Right ventricle myocardium inferior (tissue), 1 donor: ENCODE measurements at regions of chr7 and their contacts with region 1.

Region 1: DNA sequence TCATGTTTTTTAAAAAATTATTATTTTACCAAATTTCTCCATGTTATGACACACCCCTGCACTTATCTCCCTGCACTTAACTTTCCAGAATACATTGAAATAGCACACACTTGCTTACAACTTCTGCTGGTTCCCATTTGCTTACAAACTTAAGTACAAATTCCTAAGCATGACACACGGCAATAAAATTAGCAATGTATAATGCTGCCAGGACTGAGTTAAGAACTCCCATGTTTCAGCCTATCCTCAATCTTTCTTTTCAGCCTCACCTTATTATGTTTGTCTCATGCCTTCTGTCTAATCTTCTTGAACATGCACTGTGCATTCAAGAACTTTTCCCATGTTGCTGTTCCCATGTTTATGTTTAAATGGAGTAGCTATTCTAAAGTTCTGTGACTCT is 40.8 kb downstream of the PRPS1L1 start:
- DNase-seq: no peak
- ATAC-seq: peak; percentile 62

Region 2: GRCh38 chr7:18128846-18129245 is 142.0 kb after region 1 on chr7:
- intact Hi-C with region 1: no loop called
- DNase-seq: no peak
- ATAC-seq: no peak

Region 3: GRCh38 chr7:18221377-18222293 is 234.8 kb after region 1 on chr7:
- intact Hi-C with region 1: loop called (anchors 10 kb)
- DNase-seq: no peak
- ATAC-seq: no peak

Region 4: GRCh38 chr7:18337048-18337809 is 350.4 kb after region 1 on chr7:
- intact Hi-C with region 1: no loop called
- DNase-seq: no peak
- ATAC-seq: no peak